Endothelial cell of umbilical vein (primary cell): ENCODE measurements at regions of chr11 and their contacts with region 1.

Region 1: DNA sequence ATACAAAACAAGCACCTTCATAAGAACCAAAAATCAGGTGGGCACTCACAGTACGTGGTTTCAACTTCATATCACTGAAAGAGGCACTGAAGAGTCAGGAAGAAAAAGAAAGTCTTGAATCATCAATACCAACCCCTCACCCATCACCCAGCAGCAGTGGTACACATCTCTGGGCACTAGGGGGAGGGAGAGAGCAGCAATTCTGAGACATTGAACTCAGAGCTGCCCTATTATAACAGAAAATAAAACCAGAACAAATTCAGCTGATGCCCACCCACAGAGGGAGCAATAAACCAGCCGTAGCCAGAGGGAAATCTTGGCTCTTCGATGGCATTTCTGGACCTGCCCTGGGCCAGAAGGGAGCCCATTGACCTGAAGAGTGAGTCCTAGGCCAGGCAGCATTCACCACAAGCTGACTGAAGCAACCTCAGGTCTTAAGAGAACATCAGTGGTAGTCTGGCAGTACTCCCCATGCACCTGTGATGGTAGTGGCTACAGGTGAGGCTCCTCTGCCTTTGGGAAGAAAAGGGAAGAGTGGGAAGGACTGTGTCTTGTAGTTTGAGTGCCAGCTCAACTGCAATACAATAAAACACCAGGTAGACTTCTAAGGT is 42.2 kb upstream of the FAM181B start:
- DNase-seq: peak; percentile 85
- H3K4me3 ChIP-seq: no peak overlapping the region
- H3K27ac ChIP-seq: no peak overlapping the region
- H3K4me1 ChIP-seq: peaks cover 2% of the 10 kb centered on the region
- H3K27me3 ChIP-seq: no peaks in the 10 kb centered on the region
- CTCF ChIP-seq: peak; percentile 86 to 95
- POLR2A ChIP-seq: no peak

Region 2: GRCh38 chr11:82750643-82751139 is 25.1 kb before region 1 on chr11:
- CTCF ChIA-PET with region 1: interaction called, 11 read pairs
- POLR2A ChIA-PET with region 1: no interaction called
- dilution Hi-C with region 1: no loop called
- intact Hi-C with region 1: no loop called
- DNase-seq: peak; percentile 32
- H3K4me3 ChIP-seq: no peak overlapping the region
- H3K27ac ChIP-seq: no peak overlapping the region
- H3K4me1 ChIP-seq: no peaks in the 10 kb centered on the region
- H3K27me3 ChIP-seq: peaks cover 11% of the 10 kb centered on the region in 2 experiments
- CTCF ChIP-seq: no peak
- POLR2A ChIP-seq: no peak

Region 3: DNA sequence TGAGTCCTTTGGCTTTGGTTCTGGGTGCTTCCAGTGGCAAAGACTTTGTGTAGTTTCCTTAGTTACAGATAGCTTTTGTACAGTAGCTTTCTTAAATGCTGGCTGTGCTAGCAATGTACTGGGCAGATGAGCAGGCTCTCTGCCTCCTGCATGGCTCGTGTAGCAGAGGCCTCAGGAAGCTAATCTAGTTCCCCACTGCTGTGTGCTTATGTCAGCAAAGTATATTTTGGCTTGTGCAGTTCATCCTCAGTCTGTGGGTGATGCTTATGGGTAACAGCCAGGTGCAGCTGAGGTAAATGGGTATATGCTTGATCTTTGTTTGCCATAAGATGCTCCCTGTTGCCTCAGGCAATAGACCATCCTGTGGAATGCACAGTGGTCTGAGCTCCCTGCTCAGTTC is 26.9 kb after region 1 on chr11:
- CTCF ChIA-PET with region 1: interaction called, 10 read pairs
- POLR2A ChIA-PET with region 1: no interaction called
- dilution Hi-C with region 1: no loop called
- intact Hi-C with region 1: no loop called
- DNase-seq: no peak
- H3K4me3 ChIP-seq: no peak overlapping the region
- H3K27ac ChIP-seq: no peak overlapping the region
- H3K4me1 ChIP-seq: no peaks in the 10 kb centered on the region
- H3K27me3 ChIP-seq: no peaks in the 10 kb centered on the region
- CTCF ChIP-seq: no peak
- POLR2A ChIP-seq: no peak

Region 4: GRCh38 chr11:82883853-82884252 is 108.0 kb after region 1 on chr11:
- CTCF ChIA-PET with region 1: interaction called, 10 read pairs
- POLR2A ChIA-PET with region 1: no interaction called
- dilution Hi-C with region 1: no loop called
- intact Hi-C with region 1: no loop called
- DNase-seq: peak; percentile 94
- H3K4me3 ChIP-seq: no peak overlapping the region
- H3K27ac ChIP-seq: peak overlapping the region; percentile 68
- H3K4me1 ChIP-seq: peaks cover 38% of the 10 kb centered on the region
- H3K27me3 ChIP-seq: no peaks in the 10 kb centered on the region
- CTCF ChIP-seq: no peak
- POLR2A ChIP-seq: peak; percentile 66

Region 5: GRCh38 chr11:83249972-83250593 is 474.2 kb after region 1 on chr11:
- CTCF ChIA-PET with region 1: interaction called, 9 read pairs
- POLR2A ChIA-PET with region 1: no interaction called
- dilution Hi-C with region 1: no loop called
- intact Hi-C with region 1: loop called (anchors 1 kb)
- DNase-seq: peak; percentile 46
- H3K4me3 ChIP-seq: no peak overlapping the region
- H3K27ac ChIP-seq: no peak overlapping the region
- H3K4me1 ChIP-seq: no peaks in the 10 kb centered on the region
- H3K27me3 ChIP-seq: no peaks in the 10 kb centered on the region
- CTCF ChIP-seq: peak; percentile 35 to 53
- POLR2A ChIP-seq: no peak